GM12878 (cell line): ENCODE measurements at regions of chr20 and their contacts with region 1.

Region 1: GRCh38 chr20:35741892-35742740 is at the start of gene RBM39:
- DNase-seq: peak; percentile 100
- ATAC-seq: peak; percentile 87
- H3K4me3 ChIP-seq: peak within 1 kb of the TSS; percentile 96
- H3K27ac ChIP-seq: peak within 1 kb of the TSS; percentile 99
- H3K4me1 ChIP-seq: peaks cover 5% of the 10 kb centered on the region
- H3K27me3 ChIP-seq: no peaks in the 10 kb centered on the region
- CTCF ChIP-seq: peak; percentile 12 to 29 (median 18); a peak in 3 of 6 replicates
- EP300 ChIP-seq: 0 out of 4 replicates have a peak, but pooled peaks of 1 of the 2 experiments have one; percentile 46
- POLR2A ChIP-seq: peak; percentile 92
- RAD21 ChIP-seq: no peak
- polyA plus RNA-seq, gene RBM39: 135 to 150 TPM

Region 2: DNA sequence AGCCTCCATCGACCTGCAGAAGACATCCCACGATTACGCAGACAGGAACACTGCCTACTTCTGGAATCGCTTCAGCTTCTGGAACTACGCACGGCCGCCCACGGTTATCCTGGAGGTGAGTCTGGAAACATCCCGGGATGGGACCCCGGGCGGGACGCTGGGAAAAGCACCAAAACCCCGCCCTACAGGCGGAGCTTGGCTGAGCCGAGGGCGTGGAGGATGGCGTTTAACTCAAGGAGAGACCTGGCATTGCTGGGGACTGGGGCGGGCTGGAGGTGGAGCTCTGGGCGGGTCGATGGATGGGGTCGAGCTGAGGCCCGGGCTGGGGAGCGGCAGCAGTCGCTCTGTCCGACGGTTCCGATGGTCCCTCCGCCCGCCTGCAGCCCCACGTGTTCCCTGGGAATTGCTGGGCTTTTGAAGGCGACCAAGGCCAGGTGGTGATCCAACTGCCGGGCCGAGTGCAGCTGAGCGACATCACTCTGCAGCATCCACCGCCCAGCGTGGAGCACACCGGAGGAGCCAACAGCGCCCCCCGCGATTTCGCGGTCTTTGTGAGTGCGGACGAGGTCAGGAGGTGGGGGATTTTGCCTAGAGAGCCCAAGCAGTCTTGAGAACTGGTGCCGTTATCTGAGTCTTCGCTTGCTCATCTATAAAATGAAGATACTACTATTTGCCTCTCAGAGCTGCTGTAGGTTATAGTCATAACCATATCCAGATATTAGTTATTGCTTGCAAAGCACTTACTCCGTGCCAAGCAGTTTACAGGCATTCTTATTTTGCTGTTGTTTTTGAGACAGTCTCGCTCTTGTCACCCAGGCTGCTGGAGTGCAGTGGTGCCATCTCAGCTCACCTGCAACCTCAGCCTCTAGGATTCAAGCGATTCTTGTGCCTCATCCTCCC is 122.7 kb before region 1 on chr20:
- CTCF ChIA-PET with region 1: no interaction called
- POLR2A ChIA-PET with region 1: interaction called, 20 read pairs
- RAD21 ChIA-PET with region 1: interaction called, 4 read pairs
- SMC1A ChIA-PET with region 1: interaction called, 10 read pairs
- in situ Hi-C with region 1: no loop called
- intact Hi-C with region 1: no loop called
- DNase-seq: peak; percentile 45
- ATAC-seq: peak; percentile 69
- H3K4me3 ChIP-seq: peak overlapping the region; percentile 99
- H3K27ac ChIP-seq: no peak overlapping the region
- H3K4me1 ChIP-seq: peaks cover 25% of the 10 kb centered on the region
- H3K27me3 ChIP-seq: no peaks in the 10 kb centered on the region
- CTCF ChIP-seq: peak; percentile 74 to 87 (median 77)
- EP300 ChIP-seq: no peak
- POLR2A ChIP-seq: peak; percentile 61
- RAD21 ChIP-seq: peak; percentile 50

Region 3: DNA sequence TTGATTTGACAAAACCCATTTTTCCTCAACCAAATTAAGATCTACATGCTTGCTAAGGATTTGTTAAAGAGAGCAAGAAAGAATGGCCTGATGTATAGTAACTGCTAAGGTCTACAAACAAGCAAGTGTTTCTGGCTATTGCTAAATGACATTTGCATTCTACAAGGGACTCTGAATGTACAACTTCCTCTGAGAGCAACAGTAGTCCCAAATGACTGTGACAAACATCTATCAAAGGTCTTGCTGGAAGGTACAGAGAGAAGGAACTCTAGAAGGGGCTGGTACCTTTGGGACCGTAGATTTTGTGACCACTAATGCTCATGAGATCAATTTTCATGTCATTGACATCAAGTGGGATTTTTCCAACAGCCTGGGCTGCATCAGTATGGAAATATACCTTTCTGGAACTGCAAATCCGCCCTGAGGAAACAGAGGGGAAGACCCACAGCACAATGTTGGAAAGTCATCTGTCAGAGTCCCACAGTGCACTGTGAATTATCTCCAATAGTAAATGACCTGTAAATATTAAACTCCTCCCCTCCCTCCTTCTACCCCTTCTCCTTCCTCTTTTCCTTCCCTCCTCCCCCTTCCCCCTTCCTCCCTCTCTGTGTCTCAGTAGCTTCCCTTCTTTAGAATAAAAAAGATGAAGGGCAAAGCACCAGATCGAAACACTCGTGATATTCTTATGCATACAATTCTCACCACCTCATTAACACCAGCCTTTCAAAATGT is 61.5 kb before region 1 on chr20:
- CTCF ChIA-PET with region 1: no interaction called
- POLR2A ChIA-PET with region 1: interaction called, 10 read pairs
- RAD21 ChIA-PET with region 1: no interaction called
- SMC1A ChIA-PET with region 1: no interaction called
- in situ Hi-C with region 1: no loop called
- intact Hi-C with region 1: no loop called
- DNase-seq: no peak
- ATAC-seq: no peak
- H3K4me3 ChIP-seq: no peak overlapping the region
- H3K27ac ChIP-seq: no peak overlapping the region
- H3K4me1 ChIP-seq: no peaks in the 10 kb centered on the region
- H3K27me3 ChIP-seq: no peaks in the 10 kb centered on the region
- CTCF ChIP-seq: no peak
- EP300 ChIP-seq: no peak
- POLR2A ChIP-seq: no peak
- RAD21 ChIP-seq: no peak

Region 4: DNA sequence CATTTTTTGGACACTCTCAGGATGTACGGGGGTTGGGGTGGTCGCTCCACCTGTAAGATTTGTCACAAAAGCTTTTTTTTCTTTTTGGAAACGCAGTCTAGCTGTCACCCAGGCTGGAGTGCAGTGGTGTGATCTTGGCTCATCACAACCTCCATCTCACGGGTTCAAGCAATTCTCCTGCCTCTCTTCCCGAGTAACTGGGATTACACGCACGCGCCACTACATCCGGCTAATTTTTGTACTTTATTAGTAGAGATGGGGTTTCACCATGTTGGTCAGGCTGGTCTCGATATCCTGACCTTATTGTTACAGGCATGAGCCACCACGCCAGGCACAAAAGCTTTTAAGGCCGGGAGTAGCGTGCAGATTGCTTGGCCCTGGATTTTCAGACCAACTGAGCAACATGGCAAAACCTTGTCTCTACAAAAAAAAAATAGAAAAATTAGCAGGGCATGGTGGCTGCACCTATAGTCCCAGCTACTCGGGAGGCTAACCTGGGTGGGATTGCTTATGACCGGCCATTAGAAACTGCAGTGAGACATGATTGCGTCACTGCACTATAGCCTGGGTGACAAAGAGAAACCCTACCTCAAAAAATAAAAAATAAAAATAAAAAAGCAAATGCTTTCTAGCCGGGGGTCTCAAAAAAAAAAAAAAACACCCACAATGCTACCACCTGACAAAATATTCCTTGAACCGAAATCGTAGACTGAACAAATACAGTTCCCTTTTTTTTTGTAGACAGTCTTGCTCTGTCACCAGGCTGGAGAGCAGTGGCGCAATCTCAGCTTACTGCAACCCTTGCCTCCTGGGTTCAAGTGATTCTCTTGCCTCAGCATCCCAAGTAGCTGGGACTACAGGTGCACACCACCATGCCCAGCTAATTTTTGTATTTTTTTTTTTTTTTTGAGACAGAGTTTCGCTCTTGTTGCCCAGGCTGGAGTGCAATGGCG is 15.1 kb before region 1 on chr20:
- CTCF ChIA-PET with region 1: interaction called, 10 read pairs
- POLR2A ChIA-PET with region 1: interaction called, 12 read pairs
- RAD21 ChIA-PET with region 1: interaction called, 5 read pairs
- SMC1A ChIA-PET with region 1: interaction called, 7 read pairs
- in situ Hi-C with region 1: no loop called
- intact Hi-C with region 1: no loop called
- DNase-seq: no peak
- ATAC-seq: no peak
- H3K4me3 ChIP-seq: no peak overlapping the region
- H3K27ac ChIP-seq: no peak overlapping the region
- H3K4me1 ChIP-seq: no peaks in the 10 kb centered on the region; the same call in 1 of the 2 replicates
- H3K27me3 ChIP-seq: no peaks in the 10 kb centered on the region
- CTCF ChIP-seq: no peak
- EP300 ChIP-seq: no peak
- POLR2A ChIP-seq: peak; percentile 43; the same call in 1 of the 2 replicates
- RAD21 ChIP-seq: no peak

Region 5: GRCh38 chr20:35883778-35884540 is 141.8 kb after region 1 on chr20:
- CTCF ChIA-PET with region 1: interaction called, 18 read pairs
- POLR2A ChIA-PET with region 1: interaction called, 4 read pairs
- RAD21 ChIA-PET with region 1: interaction called, 9 read pairs
- SMC1A ChIA-PET with region 1: interaction called, 5 read pairs
- in situ Hi-C with region 1: no loop called
- intact Hi-C with region 1: loop called (anchors 10 kb)
- DNase-seq: no peak
- ATAC-seq: peak; percentile 97
- H3K4me3 ChIP-seq: no peak overlapping the region
- H3K27ac ChIP-seq: no peak overlapping the region
- H3K4me1 ChIP-seq: no peaks in the 10 kb centered on the region
- H3K27me3 ChIP-seq: no peaks in the 10 kb centered on the region
- CTCF ChIP-seq: peak; percentile 66 to 82 (median 77)
- EP300 ChIP-seq: no peak
- POLR2A ChIP-seq: no peak
- RAD21 ChIP-seq: peak; percentile 80

Region 6: GRCh38 chr20:37095599-37096414 is 1353.7 kb after region 1 on chr20 and contains the start of gene RBL1:
- CTCF ChIA-PET with region 1: no interaction called
- POLR2A ChIA-PET with region 1: no interaction called
- RAD21 ChIA-PET with region 1: no interaction called
- SMC1A ChIA-PET with region 1: no interaction called
- in situ Hi-C with region 1: no loop called
- intact Hi-C with region 1: loop called (anchors 10 kb)
- DNase-seq: peak; percentile 60
- ATAC-seq: peak; percentile 86
- H3K4me3 ChIP-seq: peak within 1 kb of the TSS; percentile 69
- H3K27ac ChIP-seq: peak within 1 kb of the TSS; percentile 96
- H3K4me1 ChIP-seq: peaks cover 16% of the 10 kb centered on the region
- H3K27me3 ChIP-seq: no peaks in the 10 kb centered on the region
- CTCF ChIP-seq: peak; percentile 4 to 13 (median 7); a peak in 1 of 6 replicates
- EP300 ChIP-seq: no peak
- POLR2A ChIP-seq: peak; percentile 96
- RAD21 ChIP-seq: no peak
- polyA plus RNA-seq, gene RBL1: 4.5 to 4.9 TPM